Heart left ventricle (tissue), 16 donors: ENCODE measurements at regions of chr17 and their contacts with region 1.

Region 1: DNA sequence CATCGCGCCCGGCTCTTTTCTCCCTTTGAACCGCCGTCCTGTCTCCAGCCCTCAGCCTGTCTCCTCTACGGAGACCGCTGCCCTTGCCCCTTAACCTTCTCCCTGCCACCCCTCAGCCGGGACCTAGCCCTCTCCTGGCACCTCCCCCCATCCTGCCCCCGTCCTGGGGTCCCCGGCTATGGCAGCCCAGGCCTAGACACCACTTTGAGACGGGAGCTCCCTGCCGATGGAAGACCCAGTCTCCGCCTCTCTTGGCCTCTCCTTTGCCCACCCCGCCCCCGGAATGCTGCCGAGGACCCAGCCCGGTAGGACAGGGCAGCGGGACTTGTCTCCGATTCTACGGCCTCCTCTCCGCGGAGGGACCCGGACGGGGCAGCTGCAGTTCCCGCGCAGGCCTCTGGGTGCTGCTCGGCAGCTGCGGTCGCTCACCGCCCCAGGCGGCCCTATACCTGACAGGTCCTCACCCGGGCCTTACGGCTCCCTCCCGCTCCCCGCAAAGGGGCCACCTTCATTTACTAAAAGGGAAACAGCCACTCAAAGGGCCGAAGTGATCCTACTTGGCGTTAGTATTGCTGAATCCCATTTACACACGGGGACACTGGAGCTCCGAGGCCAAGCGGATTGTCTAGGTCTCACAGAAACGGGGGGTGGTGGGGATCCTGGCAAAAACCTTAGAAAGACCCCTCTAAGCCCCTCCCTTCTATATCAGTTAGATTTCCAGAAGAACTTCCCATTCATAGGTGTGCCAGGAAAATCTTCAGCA is 32.6 kb upstream of the TAC4 start:
- DNase-seq: peak; percentile 50 to 90 (median 67)
- ATAC-seq: peak; percentile 75 to 95 (median 90)
- H3K4me3 ChIP-seq: no peak overlapping the region
- H3K27ac ChIP-seq: no peak overlapping the region
- H3K4me1 ChIP-seq: peaks cover 0 to 10% (median 4%) of the 10 kb centered on the region in 12 donors
- H3K27me3 ChIP-seq: peaks cover 4 to 65% (median 26%) of the 10 kb centered on the region in 9 donors
- CTCF ChIP-seq: peak; percentile 82 to 98 (median 94)
- POLR2A ChIP-seq: no peak

Region 2: DNA sequence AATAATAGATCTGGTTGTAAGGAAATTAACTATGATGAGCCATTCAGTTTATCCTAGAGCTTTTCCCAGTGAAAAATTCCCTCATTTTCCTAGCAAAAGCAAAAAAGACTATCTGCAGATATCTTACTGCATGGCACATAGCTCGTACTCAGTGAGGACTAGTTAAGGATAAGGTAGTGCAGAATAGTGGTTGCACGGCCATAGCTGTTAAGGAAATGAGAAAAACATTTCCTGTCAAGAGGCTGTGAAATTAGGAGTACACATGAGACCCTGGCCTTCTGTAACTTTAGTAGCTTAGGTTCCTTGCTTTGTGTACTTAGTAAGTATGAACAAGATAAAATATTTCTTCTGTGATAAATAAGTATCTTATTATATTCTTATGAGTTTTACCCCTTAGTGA is 81.7 kb before region 1 on chr17:
- intact Hi-C with region 1: no loop called
- DNase-seq: no peak
- ATAC-seq: no peak
- H3K4me3 ChIP-seq: no peak overlapping the region
- H3K27ac ChIP-seq: peak overlapping the region in 4 of 12 donors; percentile 2 to 46 (median 18)
- H3K4me1 ChIP-seq: peaks cover 0 to 39% (median 16%) of the 10 kb centered on the region in 12 donors
- H3K27me3 ChIP-seq: no peaks in the 10 kb centered on the region
- CTCF ChIP-seq: no peak
- POLR2A ChIP-seq: no peak

Region 3: GRCh38 chr17:49959183-49959935 is 78.9 kb after region 1 on chr17:
- intact Hi-C with region 1: no loop called
- DNase-seq: no peak
- ATAC-seq: no peak
- H3K4me3 ChIP-seq: no peak overlapping the region
- H3K27ac ChIP-seq: no peak overlapping the region
- H3K4me1 ChIP-seq: peaks cover 0 to 10% (median 7%) of the 10 kb centered on the region in 12 donors
- H3K27me3 ChIP-seq: peaks cover 21 to 68% (median 33%) of the 10 kb centered on the region in 9 donors
- CTCF ChIP-seq: no peak
- POLR2A ChIP-seq: no peak

Region 4: DNA sequence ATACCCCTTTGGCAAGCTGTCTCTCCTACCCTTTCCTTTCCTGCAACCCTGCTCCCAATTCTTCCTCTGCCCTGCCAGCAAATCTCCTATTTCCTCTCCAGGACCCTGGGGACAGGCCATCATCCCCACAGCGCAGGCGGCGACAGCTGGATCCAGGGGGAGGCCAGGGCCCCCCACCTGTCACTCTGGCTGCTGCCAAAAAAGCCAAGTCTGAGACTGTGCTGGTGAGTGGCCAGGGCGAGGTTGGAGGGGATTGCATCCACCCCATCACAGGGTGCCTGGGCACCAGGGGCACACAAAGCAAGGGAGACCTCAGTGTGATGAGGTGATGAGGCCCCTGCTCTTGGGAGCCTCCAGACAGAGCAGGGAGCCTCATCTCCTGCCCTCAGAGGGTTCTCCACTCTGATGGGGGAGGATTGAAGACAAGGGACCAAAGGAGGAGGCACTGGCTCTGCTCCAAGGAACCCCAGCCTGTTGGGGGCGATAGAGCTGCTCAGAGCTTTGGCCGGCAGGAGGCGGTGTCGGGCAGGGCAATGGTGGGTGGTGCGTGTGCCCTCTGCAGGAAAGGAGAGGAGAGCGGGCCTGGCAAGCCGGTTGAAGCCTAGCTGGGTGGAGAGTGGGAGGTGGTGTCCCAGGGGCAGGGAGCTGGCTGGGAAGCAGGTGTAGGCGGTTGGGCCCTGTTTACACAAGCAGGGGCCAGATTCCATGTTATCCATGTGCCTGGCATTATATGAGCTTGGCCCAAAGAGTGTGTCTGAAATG is 199.0 kb after region 1 on chr17:
- intact Hi-C with region 1: loop called in 1 of 10 experiments (anchors 5 kb)
- DNase-seq: peak in 1 of 5 donors; percentile 40
- ATAC-seq: peak in 3 of 4 donors; percentile 10 to 38 (median 29)
- H3K4me3 ChIP-seq: no peak overlapping the region
- H3K27ac ChIP-seq: peak overlapping the region in 2 of 12 donors; percentile 14 to 18
- H3K4me1 ChIP-seq: peaks cover 0 to 18% (median 1%) of the 10 kb centered on the region in 12 donors
- H3K27me3 ChIP-seq: no peaks in the 10 kb centered on the region
- CTCF ChIP-seq: peak in 5 of 12 donors; percentile 12 to 41 (median 21)
- POLR2A ChIP-seq: no peak